ENCODE measurements at regions of chr3 and their contacts with region 1.

Region 1: GRCh38 chr3:98039322-98040024 is 4.4 kb upstream of the GABRR3 start:
- DNase-seq: peak; percentile 77
- H3K4me3 Mint-ChIP-seq: peak overlapping the region; percentile 85
- H3K27ac Mint-ChIP-seq: peak overlapping the region; percentile 93
- H3K4me1 Mint-ChIP-seq: peaks cover 15% of the 10 kb centered on the region
- H3K27me3 Mint-ChIP-seq: peaks cover 27% of the 10 kb centered on the region

Region 2: GRCh38 chr3:97495896-97496295 is 543.6 kb before region 1 on chr3:
- intact Hi-C with region 1: no loop called
- DNase-seq: no peak
- H3K4me3 Mint-ChIP-seq: no peak overlapping the region
- H3K27ac Mint-ChIP-seq: no peak overlapping the region
- H3K4me1 Mint-ChIP-seq: no peaks in the 10 kb centered on the region
- H3K27me3 Mint-ChIP-seq: no peaks in the 10 kb centered on the region

Region 3: GRCh38 chr3:97821810-97822775 is 217.4 kb before region 1 on chr3 and contains the start of gene CRYBG3:
- intact Hi-C with region 1: loop called (anchors 2 kb)
- DNase-seq: peak; percentile 85
- H3K4me3 Mint-ChIP-seq: peak within 1 kb of the TSS; percentile 100
- H3K27ac Mint-ChIP-seq: peak within 1 kb of the TSS; percentile 88
- H3K4me1 Mint-ChIP-seq: peaks cover 20% of the 10 kb centered on the region
- H3K27me3 Mint-ChIP-seq: peaks cover 40% of the 10 kb centered on the region
- total RNA-seq, gene CRYBG3: 7.2 and 7.5 TPM in 2 replicates

Region 4: DNA sequence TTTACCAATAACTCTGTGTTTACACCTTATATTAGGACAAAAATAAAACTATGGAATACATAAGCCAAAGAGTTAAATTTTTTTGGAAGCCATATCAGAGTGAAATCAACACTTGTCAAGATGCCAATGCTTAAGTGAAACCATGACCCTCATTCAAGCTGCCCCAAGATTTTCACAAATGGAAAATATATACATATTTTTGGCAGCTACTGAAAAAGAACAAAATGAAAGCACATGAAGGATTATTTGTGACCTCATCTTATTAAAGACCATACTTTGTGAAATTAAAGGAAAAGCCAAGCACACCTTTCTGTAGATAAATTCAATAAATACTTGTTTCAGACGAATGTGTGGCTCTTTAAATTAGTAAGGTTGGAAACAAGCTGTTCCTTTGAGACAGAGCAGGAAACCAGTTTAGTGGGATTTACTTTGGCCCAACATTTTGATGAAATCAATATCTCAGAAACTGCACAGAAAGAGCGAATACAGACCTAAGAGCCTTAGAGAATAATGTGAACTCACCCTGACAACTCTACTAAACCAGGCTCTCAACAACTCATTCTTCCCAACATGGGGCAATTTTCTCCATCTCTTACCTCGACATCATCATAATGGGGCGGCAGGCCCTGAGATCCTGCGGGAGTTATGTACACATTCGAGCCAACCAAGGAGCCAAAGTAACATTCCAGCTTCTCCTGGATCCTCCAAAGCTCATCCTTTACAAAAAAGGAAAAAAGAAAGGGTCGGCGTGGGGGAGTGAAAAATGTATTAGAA is 78.3 kb before region 1 on chr3:
- intact Hi-C with region 1: no loop called
- DNase-seq: no peak
- H3K4me3 Mint-ChIP-seq: no peak overlapping the region
- H3K27ac Mint-ChIP-seq: no peak overlapping the region
- H3K4me1 Mint-ChIP-seq: peaks cover 30% of the 10 kb centered on the region
- H3K27me3 Mint-ChIP-seq: no peaks in the 10 kb centered on the region

Region 5: DNA sequence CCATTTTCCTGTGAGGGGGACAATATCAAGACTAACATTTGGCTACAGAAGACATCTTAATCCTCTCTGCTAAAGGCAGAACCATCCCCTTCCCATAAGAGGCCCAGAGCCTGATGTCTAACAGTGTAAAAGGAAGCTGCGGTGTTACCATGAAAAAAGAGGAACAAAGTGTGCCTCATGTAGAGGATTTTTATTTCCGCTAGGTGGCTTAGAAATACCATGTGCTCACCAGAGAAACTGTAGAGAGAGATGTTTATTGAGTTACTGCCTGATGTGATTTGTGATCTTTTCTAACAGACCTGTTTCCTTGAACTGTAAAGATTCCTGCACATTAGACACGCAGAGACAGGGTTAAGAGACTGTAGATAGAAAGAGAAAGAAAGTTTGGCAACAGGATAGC is 149.1 kb after region 1 on chr3:
- intact Hi-C with region 1: loop called (anchors 5 kb)
- DNase-seq: no peak
- H3K4me3 Mint-ChIP-seq: no peak overlapping the region
- H3K27ac Mint-ChIP-seq: no peak overlapping the region
- H3K4me1 Mint-ChIP-seq: peaks cover 4% of the 10 kb centered on the region
- H3K27me3 Mint-ChIP-seq: peaks cover 12% of the 10 kb centered on the region

Region 6: DNA sequence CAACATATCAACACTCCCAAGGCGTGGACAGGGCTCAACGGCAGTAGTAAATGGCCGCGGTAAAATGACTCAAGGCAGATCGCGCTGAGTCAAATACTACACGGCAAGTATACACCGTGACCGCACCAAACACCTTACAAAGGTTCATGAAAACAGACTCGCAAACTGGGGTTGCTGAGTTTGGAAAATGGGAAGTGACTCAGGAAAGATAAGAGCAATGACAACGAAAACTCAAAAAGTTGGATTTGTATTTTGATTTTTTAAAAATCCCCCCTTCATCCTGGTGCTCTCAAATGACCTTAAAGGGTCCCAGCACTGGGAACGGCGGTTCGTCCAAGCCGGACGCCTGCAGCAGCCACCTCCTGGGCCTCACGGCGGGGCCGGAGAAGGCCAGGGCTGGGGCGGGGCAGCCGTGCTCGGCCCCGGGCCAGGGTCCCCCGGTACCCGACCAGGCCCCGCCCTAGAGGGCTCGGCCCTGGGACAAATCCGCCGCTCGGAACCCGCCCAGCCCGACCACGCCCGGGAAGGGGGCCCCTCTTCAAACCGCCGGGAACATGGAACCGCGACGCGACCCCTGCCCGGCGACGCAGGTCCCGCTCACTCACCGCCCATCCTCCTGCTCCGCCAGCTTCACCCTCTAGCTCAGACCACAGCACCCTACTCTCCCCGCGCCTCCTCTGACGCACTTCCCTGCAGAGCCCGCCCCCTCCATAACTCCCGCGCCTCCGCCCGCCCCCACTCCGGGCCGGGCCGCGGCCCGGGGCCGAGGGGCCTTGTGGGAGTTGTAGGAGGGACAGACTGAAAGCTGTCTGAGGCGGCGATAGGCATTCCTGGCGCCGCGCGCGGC is 483.0 kb after region 1 on chr3 and contains the start of gene CLDND1:
- intact Hi-C with region 1: loop called (anchors 1 kb)
- DNase-seq: peak; percentile 94
- H3K4me3 Mint-ChIP-seq: peak within 1 kb of the TSS; percentile 92
- H3K27ac Mint-ChIP-seq: peak within 1 kb of the TSS; percentile 95
- H3K4me1 Mint-ChIP-seq: peaks cover 65% of the 10 kb centered on the region
- H3K27me3 Mint-ChIP-seq: no peaks in the 10 kb centered on the region
- total RNA-seq, gene CLDND1: 326 and 338 TPM in 2 replicates

Region 7: GRCh38 chr3:98593046-98593936 is 553.8 kb after region 1 on chr3 and contains the start of gene CPOX:
- intact Hi-C with region 1: loop called (anchors 2 kb)
- DNase-seq: peak; percentile 87
- H3K4me3 Mint-ChIP-seq: peak within 1 kb of the TSS; percentile 92
- H3K27ac Mint-ChIP-seq: peak within 1 kb of the TSS; percentile 93
- H3K4me1 Mint-ChIP-seq: peaks cover 44% of the 10 kb centered on the region
- H3K27me3 Mint-ChIP-seq: no peaks in the 10 kb centered on the region
- total RNA-seq, gene CPOX: 48.4 and 50.4 TPM in 2 replicates